Posterior cingulate gyrus (tissue), 11 donors: ENCODE measurements at regions of chr15 and their contacts with region 1.

Region 1: DNA sequence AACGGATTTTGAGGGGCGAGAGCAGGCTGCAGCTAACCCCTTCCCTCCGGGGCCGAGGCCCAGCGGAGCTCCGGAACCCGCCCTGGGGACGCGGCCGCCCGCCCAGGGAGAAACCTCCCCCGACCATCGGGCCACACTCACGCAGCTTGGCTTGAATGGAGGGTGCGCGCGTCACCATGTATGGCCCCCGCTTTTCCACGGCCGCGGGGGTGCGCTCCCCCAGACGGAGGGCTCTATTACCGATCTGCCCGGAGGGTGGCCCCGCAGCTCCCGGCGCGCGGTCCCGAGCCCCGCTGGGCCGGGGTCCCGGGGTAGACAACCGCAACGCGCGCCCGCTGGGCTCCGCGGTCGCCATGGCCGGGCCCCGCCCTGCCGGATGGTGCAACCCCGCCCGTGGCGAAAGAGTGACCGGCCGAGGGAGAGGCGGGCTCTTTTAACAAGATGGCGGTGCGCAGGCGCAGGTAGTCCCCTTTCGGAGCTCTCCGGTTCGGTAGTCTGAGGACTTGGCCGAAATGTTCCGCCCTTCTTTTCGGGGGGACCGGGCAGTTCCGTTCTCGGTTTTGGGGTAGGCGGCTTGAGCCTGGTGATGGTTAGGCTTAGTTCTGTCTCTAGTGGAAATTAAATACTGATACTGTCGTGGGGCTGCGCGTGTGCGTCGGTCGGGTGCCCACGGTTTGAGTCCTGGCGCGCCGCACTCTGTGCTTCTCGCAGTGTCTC is at the start of gene FAM219B:
- DNase-seq: peak; percentile 88 to 99 (median 95)

Region 2: GRCh38 chr15:74781431-74782258 is 125.0 kb before region 1 on chr15 and contains the start of gene CSK:
- intact Hi-C with region 1: loop called (anchors 5 kb)
- DNase-seq: peak in 8 of 10 donors; percentile 43 to 96 (median 62)

Region 3: DNA sequence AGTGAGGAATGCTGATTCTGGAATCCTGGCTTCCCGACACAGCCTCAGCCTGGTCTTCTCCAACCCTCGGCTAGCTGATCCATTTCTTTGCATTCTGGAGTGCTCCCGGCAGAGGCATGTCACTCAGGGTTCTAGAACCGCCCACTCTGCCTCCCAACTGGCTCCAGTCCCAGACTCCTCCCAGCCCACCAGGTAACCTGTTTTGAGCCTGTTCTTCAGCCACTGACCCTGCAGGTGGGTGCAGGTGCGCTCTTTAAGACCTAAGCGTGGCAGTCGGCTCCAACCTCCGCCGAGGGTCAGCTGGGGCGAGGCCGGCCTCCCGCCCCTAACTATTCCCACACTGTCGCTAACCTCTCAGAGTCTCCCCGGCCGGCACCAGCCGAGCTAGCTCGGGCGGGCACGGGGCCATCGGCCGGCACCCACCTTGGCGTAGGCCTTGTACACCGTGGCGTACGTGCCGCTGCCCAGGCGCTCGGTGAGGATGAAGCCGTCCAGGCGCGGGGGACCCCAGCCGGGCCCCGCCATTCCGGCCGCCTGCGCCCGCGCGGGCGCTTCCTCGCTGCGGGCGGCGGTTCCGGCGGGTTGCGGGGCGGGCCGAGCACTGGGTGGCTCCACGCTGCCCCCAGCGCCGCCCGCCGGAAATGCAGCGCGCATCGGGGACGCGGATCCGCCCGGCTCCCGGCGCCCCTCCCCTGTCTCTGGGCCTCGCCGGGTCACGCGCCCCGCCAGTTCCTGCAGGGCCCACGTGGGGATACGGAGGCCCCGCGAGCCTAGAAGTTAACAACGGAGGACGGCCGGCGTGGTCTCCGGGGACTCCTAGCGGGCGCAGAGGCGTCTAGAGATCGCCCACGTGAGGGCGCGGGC is 63.8 kb before region 1 on chr15 and contains the start of gene ULK3:
- intact Hi-C with region 1: loop called (anchors 2 kb)
- DNase-seq: peak; percentile 86 to 99 (median 92)

Region 4: GRCh38 chr15:74873036-74873755 is 33.4 kb before region 1 on chr15 and contains the start of gene SCAMP2:
- intact Hi-C with region 1: loop called (anchors 5 kb)
- DNase-seq: peak; percentile 92 to 99 (median 95)

Region 5: GRCh38 chr15:74937596-74938296 is 31.1 kb after region 1 on chr15 and contains the start of gene COX5A:
- intact Hi-C with region 1: loop called (anchors 1 kb)
- DNase-seq: peak; percentile 89 to 99 (median 91)